Activated T-helper 2 cell treated with anti-CD3 and anti-CD28 coated beads, Interferon-gamma antibody, Interleukin-2, Interleukin-4, amounts not matched to agents 10 μg/mL and 5 μg/mL and 100 μg/mL, durations not matched to agents 14 hours and 24 hours and 36 hours (primary cell): ENCODE measurements at regions of chr6 and their contacts with region 1.

Region 1: GRCh38 chr6:142112451-142113061 is 20.2 kb upstream of the GJE1 start:
- DNase-seq: peak; percentile 30
- H3K4me3 Mint-ChIP-seq: no peak overlapping the region
- H3K27ac Mint-ChIP-seq: no peak overlapping the region
- H3K4me1 Mint-ChIP-seq: no peaks in the 10 kb centered on the region
- H3K27me3 Mint-ChIP-seq: no peaks in the 10 kb centered on the region

Region 2: GRCh38 chr6:141437685-141438084 is 674.9 kb before region 1 on chr6:
- intact Hi-C with region 1: no loop called
- DNase-seq: no peak
- H3K4me3 Mint-ChIP-seq: no peak overlapping the region
- H3K27ac Mint-ChIP-seq: no peak overlapping the region
- H3K4me1 Mint-ChIP-seq: no peaks in the 10 kb centered on the region
- H3K27me3 Mint-ChIP-seq: peaks cover 3% of the 10 kb centered on the region

Region 3: GRCh38 chr6:141677598-141678211 is 434.9 kb before region 1 on chr6:
- intact Hi-C with region 1: loop called (anchors 5 kb)
- DNase-seq: no peak
- H3K4me3 Mint-ChIP-seq: no peak overlapping the region
- H3K27ac Mint-ChIP-seq: no peak overlapping the region
- H3K4me1 Mint-ChIP-seq: no peaks in the 10 kb centered on the region
- H3K27me3 Mint-ChIP-seq: no peaks in the 10 kb centered on the region

Region 4: DNA sequence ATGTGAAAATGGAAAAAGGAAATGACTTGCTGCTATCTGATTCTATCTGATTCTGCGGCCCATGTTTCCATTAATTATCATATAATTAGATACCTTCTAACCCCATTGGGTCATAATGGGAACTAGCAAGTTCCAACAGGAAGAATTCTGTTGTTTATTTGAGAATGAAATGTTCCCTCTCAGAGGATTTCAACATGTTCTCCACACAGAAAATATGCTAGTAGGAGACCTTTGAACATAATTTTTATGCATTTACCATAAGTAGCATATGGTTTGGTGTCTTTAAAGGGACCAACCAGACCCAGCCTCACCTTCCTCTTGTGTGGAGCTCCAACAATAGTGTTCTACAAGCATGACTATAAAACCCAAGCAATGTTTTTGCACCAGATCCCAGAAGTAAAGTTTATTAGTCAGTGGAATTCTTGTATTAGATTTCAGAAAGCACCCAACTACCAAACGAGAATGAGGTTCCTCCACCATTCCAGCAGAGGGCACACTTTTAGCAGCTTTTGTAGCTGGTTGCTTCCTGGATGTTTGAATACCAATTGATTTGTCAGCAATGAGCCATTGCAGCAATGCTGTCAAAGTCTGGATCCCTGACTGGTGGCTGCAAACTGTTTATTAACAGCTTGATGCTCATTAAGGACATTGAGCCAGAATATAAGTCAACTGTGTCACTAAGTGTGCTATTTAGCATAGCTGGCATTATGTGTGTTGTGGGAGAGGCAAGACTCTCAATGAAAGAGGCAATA is 123.4 kb before region 1 on chr6:
- intact Hi-C with region 1: loop called (anchors 1 kb)
- DNase-seq: peak; percentile 14
- H3K4me3 Mint-ChIP-seq: no peak overlapping the region
- H3K27ac Mint-ChIP-seq: no peak overlapping the region
- H3K4me1 Mint-ChIP-seq: no peaks in the 10 kb centered on the region
- H3K27me3 Mint-ChIP-seq: no peaks in the 10 kb centered on the region

Region 5: GRCh38 chr6:142566628-142567396 is 454.3 kb after region 1 on chr6:
- intact Hi-C with region 1: no loop called
- DNase-seq: peak; percentile 14
- H3K4me3 Mint-ChIP-seq: no peak overlapping the region
- H3K27ac Mint-ChIP-seq: no peak overlapping the region
- H3K4me1 Mint-ChIP-seq: peaks cover 19% of the 10 kb centered on the region
- H3K27me3 Mint-ChIP-seq: no peaks in the 10 kb centered on the region